Right cardiac atrium (tissue), 5 donors: ENCODE measurements at regions of chrX and their contacts with region 1.

Region 1: GRCh38 chrX:155068165-155068564 is 2.8 kb downstream of the CMC4 start:
- DNase-seq: no peak
- ATAC-seq: no peak
- H3K4me3 ChIP-seq: no peak overlapping the region
- H3K27ac ChIP-seq: peak overlapping the region; percentile 71
- H3K4me1 ChIP-seq: no peaks in the 10 kb centered on the region
- H3K27me3 ChIP-seq: no peaks in the 10 kb centered on the region

Region 2: DNA sequence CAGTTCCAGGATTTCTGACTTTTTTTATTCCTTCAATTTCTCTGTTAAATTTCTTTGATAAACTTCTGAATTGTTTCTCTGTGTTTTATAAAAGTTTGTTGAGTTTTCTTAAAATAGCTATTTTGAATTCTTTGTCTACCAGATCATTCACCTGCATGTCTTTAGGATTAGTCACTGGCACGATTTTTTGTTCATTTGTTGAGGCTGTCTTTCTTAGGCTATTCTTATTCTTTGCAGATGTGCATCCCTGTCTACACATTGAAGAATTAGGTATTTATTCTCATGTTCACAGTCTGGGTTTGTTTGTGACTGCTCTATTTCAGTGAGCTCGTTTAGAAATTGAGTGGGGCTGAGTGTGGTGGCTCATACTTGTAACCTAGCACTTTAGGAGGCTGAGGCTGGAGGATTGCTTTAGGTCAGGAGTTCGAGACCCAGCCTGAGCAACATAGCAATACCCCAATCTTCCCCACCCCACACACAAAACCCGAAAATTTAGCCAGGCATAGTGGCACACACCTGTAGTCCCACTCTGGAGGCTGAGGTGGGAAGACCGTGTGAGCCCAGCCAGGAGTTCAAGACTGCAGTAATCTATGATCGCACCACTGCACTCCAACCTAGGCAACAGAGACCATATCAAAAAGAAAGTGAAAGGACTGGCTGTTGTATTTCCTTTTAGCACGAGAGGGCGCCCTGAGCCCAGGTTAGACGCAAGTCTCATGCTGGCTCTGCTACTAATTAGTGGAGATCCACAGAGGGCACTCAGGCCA is 87.7 kb before region 1 on chrX:
- intact Hi-C with region 1: loop called in 1 of 4 experiments (anchors 10 kb)
- DNase-seq: peak; percentile 52 to 79 (median 67)
- ATAC-seq: peak; percentile 88
- H3K4me3 ChIP-seq: peak overlapping the region; percentile 37
- H3K27ac ChIP-seq: no peak overlapping the region
- H3K4me1 ChIP-seq: no peaks in the 10 kb centered on the region
- H3K27me3 ChIP-seq: no peaks in the 10 kb centered on the region